ENCODE measurements at regions of chr10 and their contacts with region 1.

Region 1: GRCh38 chr10:96299383-96299782 is 4.9 kb upstream of the DNTT start:
- DNase-seq: peak in 7 of 9 donors; percentile 24 to 82 (median 74)
- ATAC-seq: peak; percentile 87
- H3K4me3 ChIP-seq: no peak overlapping the region
- H3K4me3 Mint-ChIP-seq: peak overlapping the region; percentile 46 to 83 (median 74)
- H3K27ac ChIP-seq: peak overlapping the region; percentile 60
- H3K27ac Mint-ChIP-seq: peak overlapping the region in 8 of 9 donors; percentile 91 to 99 (median 96)
- H3K4me1 ChIP-seq: peaks cover 0 to 61% of the 10 kb centered on the region in 2 donors
- H3K4me1 Mint-ChIP-seq: peaks cover 16 to 99% (median 88%) of the 10 kb centered on the region in 7 donors
- H3K27me3 ChIP-seq: no peaks in the 10 kb centered on the region
- H3K27me3 Mint-ChIP-seq: peaks cover 0 to 9% (median 3%) of the 10 kb centered on the region in 5 donors

Region 2: GRCh38 chr10:96333101-96333500 is 33.7 kb after region 1 on chr10:
- CTCF ChIA-PET with region 1: interaction called, 6 read pairs
- POLR2A ChIA-PET with region 1: interaction called, 3 read pairs
- intact Hi-C with region 1: loop called in 1 of 2 experiments (anchors 2 kb)
- DNase-seq: peak in 6 of 9 donors; percentile 34 to 67 (median 60)
- ATAC-seq: peak; percentile 47
- H3K4me3 ChIP-seq: no peak overlapping the region
- H3K4me3 Mint-ChIP-seq: peak overlapping the region in 8 of 10 donors; percentile 19 to 66 (median 62)
- H3K27ac ChIP-seq: no peak overlapping the region
- H3K27ac Mint-ChIP-seq: peak overlapping the region in 4 of 9 donors; percentile 4 to 26 (median 10)
- H3K4me1 ChIP-seq: peaks cover 4 to 28% of the 10 kb centered on the region in 2 donors
- H3K4me1 Mint-ChIP-seq: peaks cover 0 to 44% (median 34%) of the 10 kb centered on the region in 7 donors
- H3K27me3 ChIP-seq: no peaks in the 10 kb centered on the region
- H3K27me3 Mint-ChIP-seq: peaks cover 0 to 37% (median 4%) of the 10 kb centered on the region in 5 donors